PC-3 (cell line): ENCODE measurements at regions of chr7 and their contacts with region 1.

Region 1: DNA sequence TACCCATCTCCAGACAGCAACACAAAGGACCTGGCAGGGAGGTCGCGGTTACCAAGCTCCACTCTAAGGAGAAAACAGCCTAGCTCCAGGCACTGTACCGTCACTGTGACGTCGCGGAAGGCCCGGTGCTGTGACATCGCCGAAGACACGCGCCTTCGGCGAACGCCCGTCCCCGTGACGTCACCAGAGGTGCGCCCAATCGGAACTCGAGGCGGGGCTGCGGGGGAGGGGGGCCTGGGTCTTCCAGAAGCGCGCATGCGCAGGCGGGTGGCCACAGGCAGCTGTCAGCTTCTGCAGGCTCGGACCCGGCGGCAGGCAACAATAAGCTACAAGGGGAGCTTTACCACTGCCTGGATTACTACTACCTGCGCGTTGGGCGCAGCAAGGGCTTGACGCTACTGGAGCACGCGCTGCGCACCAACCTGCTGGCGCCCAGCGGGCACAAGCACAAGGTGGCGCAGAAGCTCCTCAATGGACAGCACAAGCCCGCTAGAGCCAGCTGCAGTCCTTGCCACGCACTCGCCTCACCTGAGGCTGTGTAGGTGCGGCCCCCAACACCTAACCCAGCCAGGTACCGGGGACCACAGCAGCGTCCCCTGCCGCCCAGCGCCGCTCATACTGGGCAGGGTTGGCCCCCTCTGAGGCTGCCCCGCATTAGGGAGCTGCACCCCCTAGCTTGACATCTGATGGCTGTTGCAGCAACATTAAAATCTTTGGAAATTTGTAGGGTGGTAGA is 208.4 kb downstream of the TPST1 start:
- DNase-seq: peak; percentile 67
- ATAC-seq: peak; percentile 92
- H3K4me3 ChIP-seq: peak overlapping the region; percentile 64
- H3K27ac ChIP-seq: no peak overlapping the region
- H3K4me1 ChIP-seq: 0 out of 2 replicates have a peak, but pooled peaks cover 4% of the 10 kb centered on the region
- H3K27me3 ChIP-seq: no peaks in the 10 kb centered on the region
- CTCF ChIP-seq: peak; percentile 57

Region 2: DNA sequence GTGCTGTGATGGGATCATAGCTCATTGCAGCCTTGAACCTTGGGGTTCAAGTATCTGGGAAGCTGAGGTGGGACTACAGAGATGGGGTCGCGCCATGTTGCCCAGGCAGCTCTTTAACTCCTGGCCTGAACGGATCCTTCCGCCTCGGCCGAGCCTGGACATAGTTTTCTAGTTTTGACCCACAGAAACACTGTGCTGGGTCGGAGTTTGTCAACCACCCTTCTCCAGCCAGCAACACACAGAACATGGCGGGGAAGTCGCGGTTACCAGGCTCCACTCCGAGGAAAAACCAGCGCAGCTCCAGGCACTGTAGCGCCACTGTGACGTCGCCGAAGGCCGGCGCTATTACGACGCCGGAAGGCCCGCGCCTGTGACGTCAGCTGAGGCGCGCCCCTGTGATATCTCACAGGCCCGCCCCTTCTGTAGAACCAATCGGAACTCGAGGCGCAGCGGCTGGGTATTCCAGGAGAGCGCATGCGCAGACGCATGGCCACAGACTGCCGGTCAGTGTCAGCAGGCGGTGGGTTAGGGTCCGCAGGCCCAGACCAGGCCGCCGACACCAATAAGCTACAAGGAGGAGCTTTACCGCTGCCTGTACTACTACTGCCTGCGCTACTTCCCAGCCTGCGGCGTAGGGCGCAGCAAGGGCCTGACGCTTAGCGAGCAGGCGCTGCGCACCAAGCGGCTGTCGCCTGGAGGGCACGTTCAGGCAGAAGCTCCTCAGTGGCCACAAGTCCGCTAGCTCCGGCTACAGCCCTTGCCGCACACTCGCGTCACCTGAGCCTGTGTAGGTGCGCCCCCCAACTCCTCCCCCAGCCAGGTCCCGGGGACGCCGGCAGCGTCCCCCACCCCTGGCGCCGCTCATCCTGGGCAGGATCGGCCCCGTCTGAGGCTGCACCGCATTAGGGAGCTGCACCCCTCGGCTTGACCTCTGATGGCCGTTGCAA is 80.0 kb after region 1 on chr7:
- CTCF ChIA-PET with region 1: interaction called, 4 read pairs
- POLR2A ChIA-PET with region 1: no interaction called
- intact Hi-C with region 1: loop called (anchors 10 kb)
- DNase-seq: peak; percentile 97
- ATAC-seq: peak; percentile 95
- H3K4me3 ChIP-seq: peak overlapping the region; percentile 76
- H3K27ac ChIP-seq: peak overlapping the region; percentile 52
- H3K4me1 ChIP-seq: peaks cover 6% of the 10 kb centered on the region; the same call in 1 of the 2 replicates
- H3K27me3 ChIP-seq: no peaks in the 10 kb centered on the region
- CTCF ChIP-seq: no peak